Activated T-helper 1 cell treated with anti-CD3 and anti-CD28 coated beads, Interleukin-12 subunit alpha, Interleukin-12 subunit beta, Interleukin-2, Interleukin-4 antibody, amounts not matched to agents 30 ng/mL and 10 ng/mL and 1 ng/mL, durations not matched to agents 14 hours and 24 hours and 36 hours (primary cell): ENCODE measurements at regions of chr1 and their contacts with region 1.

Region 1: GRCh38 chr1:235075188-235075926 is 53.3 kb downstream of the TOMM20 start:
- DNase-seq: peak; percentile 34
- H3K4me3 Mint-ChIP-seq: peak overlapping the region; percentile 71
- H3K27ac Mint-ChIP-seq: peak overlapping the region; percentile 99
- H3K4me1 Mint-ChIP-seq: peaks cover 42% of the 10 kb centered on the region
- H3K27me3 Mint-ChIP-seq: no peaks in the 10 kb centered on the region

Region 2: GRCh38 chr1:234499119-234499942 is 576.0 kb before region 1 on chr1:
- intact Hi-C with region 1: loop called (anchors 1 kb)
- DNase-seq: peak; percentile 78
- H3K4me3 Mint-ChIP-seq: no peak overlapping the region
- H3K27ac Mint-ChIP-seq: peak overlapping the region; percentile 80
- H3K4me1 Mint-ChIP-seq: peaks cover 83% of the 10 kb centered on the region
- H3K27me3 Mint-ChIP-seq: no peaks in the 10 kb centered on the region

Region 3: GRCh38 chr1:234772345-234773147 is 302.8 kb before region 1 on chr1:
- intact Hi-C with region 1: loop called (anchors 2 kb)
- DNase-seq: peak; percentile 83
- H3K4me3 Mint-ChIP-seq: peak overlapping the region; percentile 80
- H3K27ac Mint-ChIP-seq: peak overlapping the region; percentile 100
- H3K4me1 Mint-ChIP-seq: peaks cover 56% of the 10 kb centered on the region
- H3K27me3 Mint-ChIP-seq: no peaks in the 10 kb centered on the region

Region 4: DNA sequence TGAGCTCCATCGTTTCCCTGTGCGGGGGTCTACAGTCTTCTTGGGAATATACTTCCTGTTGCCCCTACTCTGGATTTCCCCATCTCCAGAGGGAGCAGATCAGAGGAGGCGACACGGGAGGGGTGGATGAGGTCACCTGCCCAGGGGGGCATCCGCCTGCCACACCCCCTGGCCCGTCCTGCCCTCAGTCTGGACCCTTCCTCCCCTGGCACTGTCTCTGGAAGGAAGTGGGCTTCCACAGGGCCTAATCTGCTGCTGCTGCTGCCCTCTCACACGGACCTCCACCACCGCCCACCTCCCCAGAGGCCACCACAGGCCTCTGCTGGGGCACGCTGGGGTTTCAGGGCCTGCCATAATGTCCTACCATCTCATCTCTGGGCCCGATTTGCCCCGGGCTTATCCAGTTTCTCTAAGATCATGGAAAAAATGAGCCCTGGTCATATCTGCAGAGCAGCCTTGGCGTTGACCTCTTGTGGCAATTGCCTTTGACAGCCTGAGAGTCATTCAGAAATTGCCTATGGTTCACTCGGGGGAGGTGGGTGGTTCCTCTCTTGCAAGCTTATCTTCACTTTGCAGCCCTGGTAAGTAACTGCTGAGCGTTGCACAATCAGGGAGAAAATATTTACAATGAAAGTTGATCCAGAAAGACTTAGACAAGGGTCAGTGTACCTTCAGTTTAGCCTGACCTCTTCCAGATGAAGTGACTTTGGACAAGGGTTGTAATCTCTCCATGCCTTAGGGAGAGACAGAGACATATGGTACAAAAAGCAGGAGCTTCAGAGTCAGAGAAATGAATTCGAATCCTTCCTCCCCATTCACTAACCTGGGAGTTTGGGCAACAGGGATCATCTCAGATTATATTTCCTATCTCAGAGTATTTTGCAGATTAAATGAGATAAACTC is 199.2 kb before region 1 on chr1:
- intact Hi-C with region 1: loop called (anchors 1 kb)
- DNase-seq: no peak
- H3K4me3 Mint-ChIP-seq: peak overlapping the region; percentile 11
- H3K27ac Mint-ChIP-seq: peak overlapping the region; percentile 88
- H3K4me1 Mint-ChIP-seq: peaks cover 55% of the 10 kb centered on the region
- H3K27me3 Mint-ChIP-seq: no peaks in the 10 kb centered on the region

Region 5: GRCh38 chr1:234925440-234926263 is 149.7 kb before region 1 on chr1:
- intact Hi-C with region 1: loop called (anchors 1 kb)
- DNase-seq: peak; percentile 17
- H3K4me3 Mint-ChIP-seq: peak overlapping the region; percentile 74
- H3K27ac Mint-ChIP-seq: peak overlapping the region; percentile 97
- H3K4me1 Mint-ChIP-seq: peaks cover 64% of the 10 kb centered on the region
- H3K27me3 Mint-ChIP-seq: no peaks in the 10 kb centered on the region

Region 6: GRCh38 chr1:234944439-234945344 is 130.7 kb before region 1 on chr1:
- intact Hi-C with region 1: no loop called
- DNase-seq: no peak
- H3K4me3 Mint-ChIP-seq: no peak overlapping the region
- H3K27ac Mint-ChIP-seq: peak overlapping the region; percentile 83
- H3K4me1 Mint-ChIP-seq: peaks cover 12% of the 10 kb centered on the region
- H3K27me3 Mint-ChIP-seq: no peaks in the 10 kb centered on the region

Region 7: GRCh38 chr1:234987415-234988154 is 87.8 kb before region 1 on chr1:
- intact Hi-C with region 1: loop called (anchors 1 kb)
- DNase-seq: no peak
- H3K4me3 Mint-ChIP-seq: peak overlapping the region; percentile 53
- H3K27ac Mint-ChIP-seq: peak overlapping the region; percentile 95
- H3K4me1 Mint-ChIP-seq: peaks cover 83% of the 10 kb centered on the region
- H3K27me3 Mint-ChIP-seq: no peaks in the 10 kb centered on the region